ENCODE measurements at regions of chr2 and their contacts with region 1.

Region 1: GRCh38 chr2:72579591-72580180 is 246.1 kb downstream of the EXOC6B start:
- DNase-seq: peak in 2 of 5 donors; percentile 64 to 81
- H3K4me3 ChIP-seq: no peak overlapping the region
- H3K27ac ChIP-seq: no peak overlapping the region
- H3K4me1 ChIP-seq: no peaks in the 10 kb centered on the region
- H3K27me3 ChIP-seq: no peaks in the 10 kb centered on the region
- CTCF ChIP-seq: peak; percentile 56

Region 2: GRCh38 chr2:71558300-71559051 is 1021.2 kb before region 1 on chr2:
- intact Hi-C with region 1: loop called (anchors 10 kb)
- DNase-seq: peak in 3 of 5 donors; percentile 35 to 52 (median 43)
- H3K4me3 ChIP-seq: no peak overlapping the region
- H3K27ac ChIP-seq: peak overlapping the region in 1 of 2 donors; percentile 35
- H3K4me1 ChIP-seq: peaks cover 0 to 14% (median 8%) of the 10 kb centered on the region in 3 donors
- H3K27me3 ChIP-seq: no peaks in the 10 kb centered on the region
- CTCF ChIP-seq: no peak

Region 3: DNA sequence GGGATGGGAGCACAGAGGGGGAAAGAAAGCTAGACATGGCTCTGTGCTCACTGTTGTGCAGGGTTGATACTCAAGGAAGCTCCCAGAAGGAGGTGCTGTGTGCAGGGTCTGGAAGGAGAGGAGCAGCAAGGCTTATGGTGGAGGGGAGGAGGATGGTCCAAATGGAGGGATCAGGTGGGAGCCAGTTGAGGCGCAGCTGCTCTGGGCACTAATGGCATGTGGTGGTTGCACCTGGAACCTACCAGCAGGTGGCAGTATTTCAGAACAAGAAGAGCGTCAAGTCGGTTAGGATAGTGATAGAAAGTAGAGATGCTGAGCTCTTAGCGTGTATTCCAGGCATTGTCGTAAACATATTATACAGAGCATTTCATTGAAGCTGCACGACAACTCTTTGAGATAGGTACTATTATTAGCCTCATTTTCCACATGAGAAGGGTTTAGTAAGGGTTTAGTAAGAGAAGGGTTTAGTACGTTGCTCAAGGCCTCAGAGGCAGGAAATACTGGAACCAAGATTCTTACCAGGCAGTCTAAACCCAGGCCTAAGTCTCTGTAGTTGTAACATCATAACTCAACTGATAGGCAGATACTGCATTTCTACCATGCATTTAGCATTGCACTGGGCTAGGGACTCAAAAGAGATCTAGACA is 655.7 kb before region 1 on chr2:
- intact Hi-C with region 1: loop called (anchors 10 kb)
- DNase-seq: peak in 4 of 5 donors; percentile 74 to 89 (median 78)
- H3K4me3 ChIP-seq: no peak overlapping the region
- H3K27ac ChIP-seq: no peak overlapping the region
- H3K4me1 ChIP-seq: no peaks in the 10 kb centered on the region
- H3K27me3 ChIP-seq: peaks cover 3% of the 10 kb centered on the region
- CTCF ChIP-seq: peak; percentile 78

Measured in kidney (tissue), 22 donors.